Heart left ventricle (tissue), 16 donors: ENCODE measurements at regions of chr11 and their contacts with region 1.

Region 1: GRCh38 chr11:27857014-27857413 is 156.8 kb upstream of the BDNF start:
- DNase-seq: no peak
- ATAC-seq: no peak
- H3K4me3 ChIP-seq: no peak overlapping the region
- H3K27ac ChIP-seq: no peak overlapping the region
- H3K4me1 ChIP-seq: no peaks in the 10 kb centered on the region
- H3K27me3 ChIP-seq: no peaks in the 10 kb centered on the region
- CTCF ChIP-seq: no peak
- POLR2A ChIP-seq: no peak

Region 2: GRCh38 chr11:27786331-27786730 is 70.7 kb before region 1 on chr11:
- intact Hi-C with region 1: loop called in 1 of 10 experiments (anchors 5 kb)
- DNase-seq: no peak
- ATAC-seq: no peak
- H3K4me3 ChIP-seq: no peak overlapping the region
- H3K27ac ChIP-seq: no peak overlapping the region
- H3K4me1 ChIP-seq: no peaks in the 10 kb centered on the region
- H3K27me3 ChIP-seq: no peaks in the 10 kb centered on the region
- CTCF ChIP-seq: no peak
- POLR2A ChIP-seq: no peak

Region 3: DNA sequence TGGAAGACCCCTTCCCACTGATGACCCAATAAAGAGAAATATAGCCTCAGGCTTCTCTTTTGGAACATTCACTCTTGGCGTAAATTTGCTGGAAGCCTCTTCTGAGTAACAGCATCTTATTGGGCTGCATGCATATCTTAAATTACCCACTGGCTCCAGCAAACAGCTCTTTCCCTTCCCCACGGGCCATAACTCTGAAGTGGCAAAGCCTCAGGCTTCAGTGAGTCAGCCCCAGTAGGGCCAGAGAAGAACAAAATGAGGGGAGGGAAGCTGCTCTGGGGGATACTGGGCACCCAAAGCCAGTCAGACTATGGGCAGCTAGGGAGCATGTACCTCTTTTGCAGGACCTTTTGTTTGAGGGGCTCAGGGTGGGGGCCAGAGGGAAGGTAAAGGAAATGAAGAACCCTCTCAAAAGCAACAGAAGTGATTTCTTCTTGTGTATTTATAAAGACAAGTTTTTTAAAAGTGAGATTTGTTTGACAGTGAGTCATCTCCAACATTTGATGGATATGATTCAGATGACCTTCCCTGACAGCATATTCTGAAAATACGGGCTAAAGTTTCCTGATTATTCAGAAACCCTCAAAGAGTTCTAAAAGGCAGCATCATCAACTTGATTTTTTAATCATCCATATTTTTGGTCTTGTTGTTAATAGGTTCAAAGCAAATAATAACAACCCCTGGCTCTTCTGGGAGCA is 47.5 kb after region 1 on chr11:
- intact Hi-C with region 1: no loop called
- DNase-seq: no peak
- ATAC-seq: no peak
- H3K4me3 ChIP-seq: no peak overlapping the region
- H3K27ac ChIP-seq: no peak overlapping the region
- H3K4me1 ChIP-seq: no peaks in the 10 kb centered on the region
- H3K27me3 ChIP-seq: peaks cover 0 to 4% (median 0%) of the 10 kb centered on the region in 9 donors
- CTCF ChIP-seq: no peak
- POLR2A ChIP-seq: no peak